Activated B cell treated with CpG ODN at 0.5 μM for 24 hours (primary cell): ENCODE measurements at regions of chr4 and their contacts with region 1.

Region 1: GRCh38 chr4:102449751-102450352 is 51.3 kb upstream of the NFKB1 start:
- DNase-seq: no peak
- ATAC-seq: peak; percentile 85
- H3K4me3 Mint-ChIP-seq: no peak overlapping the region
- H3K27ac Mint-ChIP-seq: no peak overlapping the region
- H3K4me1 Mint-ChIP-seq: peaks cover 21% of the 10 kb centered on the region
- H3K27me3 Mint-ChIP-seq: no peaks in the 10 kb centered on the region
- CTCF ChIP-seq: no peak

Region 2: GRCh38 chr4:102525097-102525496 is 75.2 kb after region 1 on chr4:
- CTCF ChIA-PET with region 1: no interaction called
- POLR2A ChIA-PET with region 1: interaction called, 3 read pairs
- intact Hi-C with region 1: loop called (anchors 5 kb)
- DNase-seq: no peak
- ATAC-seq: no peak
- H3K4me3 Mint-ChIP-seq: peak overlapping the region; percentile 46
- H3K27ac Mint-ChIP-seq: peak overlapping the region; percentile 50
- H3K4me1 Mint-ChIP-seq: peaks cover 88% of the 10 kb centered on the region
- H3K27me3 Mint-ChIP-seq: no peaks in the 10 kb centered on the region
- CTCF ChIP-seq: no peak

Region 3: GRCh38 chr4:102620697-102621497 is 171.0 kb after region 1 on chr4:
- CTCF ChIA-PET with region 1: interaction called, 10 read pairs
- POLR2A ChIA-PET with region 1: interaction called, 3 read pairs
- intact Hi-C with region 1: loop called (anchors 1 kb)
- DNase-seq: no peak
- ATAC-seq: no peak
- H3K4me3 Mint-ChIP-seq: no peak overlapping the region
- H3K27ac Mint-ChIP-seq: peak overlapping the region; percentile 30
- H3K4me1 Mint-ChIP-seq: peaks cover 27% of the 10 kb centered on the region
- H3K27me3 Mint-ChIP-seq: no peaks in the 10 kb centered on the region
- CTCF ChIP-seq: no peak

Region 4: GRCh38 chr4:102687373-102687981 is 237.6 kb after region 1 on chr4:
- CTCF ChIA-PET with region 1: no interaction called
- POLR2A ChIA-PET with region 1: no interaction called
- intact Hi-C with region 1: no loop called
- DNase-seq: no peak
- ATAC-seq: peak; percentile 74
- H3K4me3 Mint-ChIP-seq: no peak overlapping the region
- H3K27ac Mint-ChIP-seq: no peak overlapping the region
- H3K4me1 Mint-ChIP-seq: no peaks in the 10 kb centered on the region
- H3K27me3 Mint-ChIP-seq: no peaks in the 10 kb centered on the region
- CTCF ChIP-seq: no peak

Region 5: GRCh38 chr4:103008875-103009729 is 559.2 kb after region 1 on chr4:
- CTCF ChIA-PET with region 1: interaction called, 5 read pairs
- POLR2A ChIA-PET with region 1: no interaction called
- intact Hi-C with region 1: loop called (anchors 1 kb)
- DNase-seq: no peak
- ATAC-seq: peak; percentile 92
- H3K4me3 Mint-ChIP-seq: no peak overlapping the region
- H3K27ac Mint-ChIP-seq: no peak overlapping the region
- H3K4me1 Mint-ChIP-seq: no peaks in the 10 kb centered on the region
- H3K27me3 Mint-ChIP-seq: no peaks in the 10 kb centered on the region
- CTCF ChIP-seq: peak; percentile 68

Region 6: GRCh38 chr4:103091601-103092223 is 641.9 kb after region 1 on chr4:
- CTCF ChIA-PET with region 1: no interaction called
- POLR2A ChIA-PET with region 1: no interaction called
- intact Hi-C with region 1: loop called (anchors 1 kb)
- DNase-seq: no peak
- ATAC-seq: peak; percentile 88
- H3K4me3 Mint-ChIP-seq: no peak overlapping the region
- H3K27ac Mint-ChIP-seq: no peak overlapping the region
- H3K4me1 Mint-ChIP-seq: peaks cover 12% of the 10 kb centered on the region
- H3K27me3 Mint-ChIP-seq: no peaks in the 10 kb centered on the region
- CTCF ChIP-seq: peak; percentile 38

Region 7: GRCh38 chr4:103934178-103934789 is 1484.4 kb after region 1 on chr4:
- CTCF ChIA-PET with region 1: no interaction called
- POLR2A ChIA-PET with region 1: no interaction called
- intact Hi-C with region 1: loop called (anchors 10 kb)
- DNase-seq: no peak
- ATAC-seq: no peak
- H3K4me3 Mint-ChIP-seq: no peak overlapping the region
- H3K27ac Mint-ChIP-seq: no peak overlapping the region
- H3K4me1 Mint-ChIP-seq: no peaks in the 10 kb centered on the region
- H3K27me3 Mint-ChIP-seq: no peaks in the 10 kb centered on the region
- CTCF ChIP-seq: peak; percentile 88